Caco-2 (cell line): ENCODE measurements at regions of chr11 and their contacts with region 1.

Region 1: DNA sequence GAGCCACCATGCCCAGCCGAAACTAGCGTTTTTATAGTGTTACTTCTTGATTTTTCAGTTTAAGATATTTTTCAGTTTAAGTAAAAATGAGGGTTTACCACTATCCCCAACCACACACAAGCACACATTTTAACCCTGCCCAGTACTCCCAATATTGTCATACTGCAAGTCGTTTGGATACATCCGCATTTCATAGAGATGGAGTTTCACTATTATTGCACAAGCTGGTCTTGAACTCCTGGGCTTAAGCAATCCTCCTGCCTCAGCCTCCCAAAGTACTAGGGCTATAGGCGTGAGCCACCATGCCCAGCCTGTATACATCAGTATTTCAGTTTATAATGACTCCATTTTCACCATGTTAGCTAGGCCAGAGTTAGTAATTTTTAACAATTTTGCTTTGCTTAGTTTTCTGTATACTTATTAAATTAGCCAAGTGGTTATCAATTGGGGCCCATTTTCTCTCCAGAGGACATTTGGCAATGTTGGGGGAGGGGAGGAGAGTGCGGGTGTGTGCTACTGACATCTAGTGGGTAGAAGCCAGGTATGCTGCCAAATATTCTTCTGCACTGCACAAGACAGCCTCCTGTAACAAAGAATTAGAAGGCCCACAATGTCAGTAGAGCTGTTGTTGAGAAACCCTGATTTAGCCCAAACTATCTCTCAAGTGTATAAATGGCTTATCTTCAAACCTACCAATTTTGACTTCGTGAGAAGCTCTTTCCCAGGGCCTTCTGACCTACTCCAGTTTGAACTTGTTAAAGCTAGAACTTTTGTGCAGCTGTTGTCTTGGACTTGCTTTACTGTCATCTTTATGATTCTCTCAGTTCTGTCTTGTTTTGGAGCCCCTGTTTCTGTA is 7.3 kb downstream of the USP47 start:
- DNase-seq: peak; percentile 70 to 81
- H3K4me3 ChIP-seq: no peak overlapping the region
- H3K4me3 Mint-ChIP-seq: no peak overlapping the region
- H3K27ac Mint-ChIP-seq: no peak overlapping the region
- H3K4me1 ChIP-seq: peaks cover 37% of the 10 kb centered on the region
- H3K4me1 Mint-ChIP-seq: peaks cover 36% of the 10 kb centered on the region
- H3K27me3 ChIP-seq: no peaks in the 10 kb centered on the region
- H3K27me3 Mint-ChIP-seq: no peaks in the 10 kb centered on the region
- CTCF ChIP-seq: peak; percentile 78 to 93

Region 2: DNA sequence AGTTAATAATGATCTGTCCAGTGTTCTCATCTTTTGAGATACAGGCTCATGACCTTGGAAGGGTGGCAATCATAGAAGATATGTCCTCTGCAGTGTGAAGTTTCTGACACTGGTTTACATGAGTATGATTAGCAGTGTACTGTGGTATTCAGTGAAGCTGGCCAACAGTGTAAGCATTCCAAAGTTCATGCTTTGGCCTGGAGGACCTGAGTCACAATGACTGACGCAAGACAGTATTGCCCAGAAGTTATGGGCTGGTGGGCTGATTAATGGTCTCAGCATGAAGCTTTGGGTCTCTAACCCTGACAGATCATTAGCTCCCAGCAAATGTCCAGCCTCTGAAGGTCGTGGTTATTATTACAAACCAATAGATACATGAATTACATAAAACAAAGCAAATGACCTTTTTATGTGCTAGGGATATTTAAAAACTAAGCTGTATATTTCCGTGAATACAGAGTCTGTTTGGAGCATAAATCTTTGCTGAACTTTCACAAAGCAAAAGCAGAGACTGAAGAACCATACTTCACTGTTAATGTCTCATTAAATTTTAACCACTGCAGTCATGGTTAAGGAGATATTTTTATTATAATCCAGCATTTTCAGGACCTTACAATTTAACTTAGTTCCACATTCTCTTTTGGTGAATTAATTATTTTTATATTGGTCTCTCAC is 35.7 kb before region 1 on chr11:
- CTCF ChIA-PET with region 1: no interaction called
- POLR2A ChIA-PET with region 1: no interaction called
- intact Hi-C with region 1: loop called (anchors 2 kb)
- DNase-seq: peak; percentile 70 to 78
- H3K4me3 ChIP-seq: no peak overlapping the region
- H3K4me3 Mint-ChIP-seq: no peak overlapping the region
- H3K27ac Mint-ChIP-seq: no peak overlapping the region
- H3K4me1 ChIP-seq: peaks cover 25% of the 10 kb centered on the region
- H3K4me1 Mint-ChIP-seq: peaks cover 19% of the 10 kb centered on the region
- H3K27me3 ChIP-seq: no peaks in the 10 kb centered on the region
- H3K27me3 Mint-ChIP-seq: no peaks in the 10 kb centered on the region
- CTCF ChIP-seq: no peak

Region 3: GRCh38 chr11:11916981-11917399 is 67.9 kb after region 1 on chr11:
- CTCF ChIA-PET with region 1: no interaction called
- POLR2A ChIA-PET with region 1: interaction called, 12 read pairs
- intact Hi-C with region 1: no loop called
- DNase-seq: no peak
- H3K4me3 ChIP-seq: no peak overlapping the region
- H3K4me3 Mint-ChIP-seq: no peak overlapping the region
- H3K27ac Mint-ChIP-seq: no peak overlapping the region
- H3K4me1 ChIP-seq: no peaks in the 10 kb centered on the region
- H3K4me1 Mint-ChIP-seq: no peaks in the 10 kb centered on the region
- H3K27me3 ChIP-seq: no peaks in the 10 kb centered on the region
- H3K27me3 Mint-ChIP-seq: no peaks in the 10 kb centered on the region
- CTCF ChIP-seq: no peak